Natural killer cell (primary cell): ENCODE measurements at regions of chr2 and their contacts with region 1.

Region 1: GRCh38 chr2:135709992-135710391 is 31.7 kb upstream of the UBXN4 start:
- DNase-seq: peak; percentile 60 to 80
- ATAC-seq: peak; percentile 81 to 82 (median 81)
- H3K4me3 ChIP-seq: no peak overlapping the region
- H3K4me3 Mint-ChIP-seq: no peak overlapping the region
- H3K27ac ChIP-seq: no peak overlapping the region
- H3K27ac Mint-ChIP-seq: no peak overlapping the region
- H3K4me1 ChIP-seq: no peaks in the 10 kb centered on the region
- H3K4me1 Mint-ChIP-seq: no peaks in the 10 kb centered on the region
- H3K27me3 ChIP-seq: no peaks in the 10 kb centered on the region
- H3K27me3 Mint-ChIP-seq: no peaks in the 10 kb centered on the region
- CTCF ChIP-seq: peak; percentile 97

Region 2: DNA sequence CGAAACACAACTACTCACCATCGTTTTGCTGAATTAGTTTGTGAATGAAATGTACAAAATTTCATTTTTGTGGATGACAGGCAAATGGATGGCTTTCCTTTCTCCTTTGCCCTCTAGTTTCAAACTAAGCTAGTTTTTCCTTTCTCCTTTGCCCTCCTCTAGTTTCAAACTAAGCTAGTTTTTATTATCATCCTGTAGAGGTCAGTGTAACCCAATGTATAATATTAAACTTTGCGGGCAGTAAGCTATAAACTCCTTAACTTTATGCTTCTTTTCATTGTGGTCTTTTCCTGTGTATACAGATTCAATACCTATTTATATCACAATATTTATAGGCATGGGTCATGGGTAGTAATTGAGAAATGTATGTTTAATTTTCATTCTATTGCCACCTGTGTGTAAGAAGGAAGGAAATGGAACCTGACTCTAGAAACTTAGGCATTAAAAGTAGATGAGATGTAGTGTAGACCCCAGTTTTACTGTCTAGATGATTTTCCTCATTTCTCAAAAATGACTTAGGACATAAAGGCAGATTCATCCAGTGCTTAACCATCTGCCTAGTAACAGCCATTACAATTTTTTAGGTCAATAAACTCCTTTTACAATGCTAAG is 720.9 kb before region 1 on chr2:
- intact Hi-C with region 1: loop called (anchors 1 kb)
- DNase-seq: peak in 1 of 2 donors; percentile 54
- ATAC-seq: peak in 1 of 3 donors; percentile 61
- H3K4me3 ChIP-seq: no peak overlapping the region
- H3K4me3 Mint-ChIP-seq: no peak overlapping the region
- H3K27ac ChIP-seq: no peak overlapping the region
- H3K27ac Mint-ChIP-seq: no peak overlapping the region
- H3K4me1 ChIP-seq: no peaks in the 10 kb centered on the region
- H3K4me1 Mint-ChIP-seq: no peaks in the 10 kb centered on the region
- H3K27me3 ChIP-seq: no peaks in the 10 kb centered on the region
- H3K27me3 Mint-ChIP-seq: peaks cover 10 to 18% of the 10 kb centered on the region in 2 donors
- CTCF ChIP-seq: peak; percentile 66

Region 3: GRCh38 chr2:135004005-135004746 is 705.8 kb before region 1 on chr2:
- intact Hi-C with region 1: loop called (anchors 1 kb)
- DNase-seq: peak; percentile 47 to 82
- ATAC-seq: peak; percentile 66 to 95 (median 76)
- H3K4me3 ChIP-seq: no peak overlapping the region
- H3K4me3 Mint-ChIP-seq: no peak overlapping the region
- H3K27ac ChIP-seq: no peak overlapping the region
- H3K27ac Mint-ChIP-seq: no peak overlapping the region
- H3K4me1 ChIP-seq: peaks cover 5% of the 10 kb centered on the region
- H3K4me1 Mint-ChIP-seq: peaks cover 5 to 8% of the 10 kb centered on the region in 2 donors
- H3K27me3 ChIP-seq: peaks cover 3% of the 10 kb centered on the region
- H3K27me3 Mint-ChIP-seq: peaks cover 18 to 36% of the 10 kb centered on the region in 2 donors
- CTCF ChIP-seq: peak; percentile 94

Region 4: DNA sequence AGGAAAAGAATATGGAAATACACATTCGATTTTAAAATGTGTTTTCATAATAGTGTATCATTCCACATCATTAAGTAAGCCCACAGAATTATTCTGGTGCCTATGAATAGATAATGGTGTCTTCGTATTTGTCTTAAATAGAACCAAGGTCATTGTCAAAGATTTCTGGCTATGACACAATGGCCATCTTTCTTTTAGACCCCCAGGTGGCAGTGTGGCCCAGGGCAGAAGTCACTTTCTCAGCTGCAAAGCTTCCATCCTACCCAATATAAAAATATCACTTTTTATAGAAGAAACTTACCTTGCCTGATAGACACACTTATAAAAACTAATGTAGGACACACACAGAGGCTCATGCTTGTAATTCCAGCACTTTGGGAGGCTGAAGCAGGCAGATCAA is 236.4 kb before region 1 on chr2:
- intact Hi-C with region 1: loop called (anchors 1 kb)
- DNase-seq: peak in 1 of 2 donors; percentile 61
- ATAC-seq: no peak
- H3K4me3 ChIP-seq: no peak overlapping the region
- H3K4me3 Mint-ChIP-seq: no peak overlapping the region
- H3K27ac ChIP-seq: no peak overlapping the region
- H3K27ac Mint-ChIP-seq: no peak overlapping the region
- H3K4me1 ChIP-seq: no peaks in the 10 kb centered on the region
- H3K4me1 Mint-ChIP-seq: no peaks in the 10 kb centered on the region
- H3K27me3 ChIP-seq: no peaks in the 10 kb centered on the region
- H3K27me3 Mint-ChIP-seq: no peaks in the 10 kb centered on the region
- CTCF ChIP-seq: no peak